ENCODE measurements at regions of chr11 and their contacts with region 1.

Region 1: GRCh38 chr11:114059278-114059983 is at the start of gene ZBTB16:
- DNase-seq: peak; percentile 88 to 90
- ATAC-seq: peak; percentile 71 to 89 (median 78)
- H3K4me3 ChIP-seq: peak within 1 kb of the TSS; percentile 77 to 98 (median 94)
- H3K27ac ChIP-seq: peak within 1 kb of the TSS; percentile 92 to 100 (median 97)
- H3K4me1 ChIP-seq: peaks cover 14 to 60% (median 54%) of the 10 kb centered on the region in 9 donors
- H3K27me3 ChIP-seq: peaks cover 0 to 20% (median 0%) of the 10 kb centered on the region in 7 donors
- CTCF ChIP-seq: peak in 7 of 9 donors; percentile 30 to 70 (median 40)
- total RNA-seq, gene ZBTB16: 18.3 to 108 (median 72.9) TPM

Region 2: DNA sequence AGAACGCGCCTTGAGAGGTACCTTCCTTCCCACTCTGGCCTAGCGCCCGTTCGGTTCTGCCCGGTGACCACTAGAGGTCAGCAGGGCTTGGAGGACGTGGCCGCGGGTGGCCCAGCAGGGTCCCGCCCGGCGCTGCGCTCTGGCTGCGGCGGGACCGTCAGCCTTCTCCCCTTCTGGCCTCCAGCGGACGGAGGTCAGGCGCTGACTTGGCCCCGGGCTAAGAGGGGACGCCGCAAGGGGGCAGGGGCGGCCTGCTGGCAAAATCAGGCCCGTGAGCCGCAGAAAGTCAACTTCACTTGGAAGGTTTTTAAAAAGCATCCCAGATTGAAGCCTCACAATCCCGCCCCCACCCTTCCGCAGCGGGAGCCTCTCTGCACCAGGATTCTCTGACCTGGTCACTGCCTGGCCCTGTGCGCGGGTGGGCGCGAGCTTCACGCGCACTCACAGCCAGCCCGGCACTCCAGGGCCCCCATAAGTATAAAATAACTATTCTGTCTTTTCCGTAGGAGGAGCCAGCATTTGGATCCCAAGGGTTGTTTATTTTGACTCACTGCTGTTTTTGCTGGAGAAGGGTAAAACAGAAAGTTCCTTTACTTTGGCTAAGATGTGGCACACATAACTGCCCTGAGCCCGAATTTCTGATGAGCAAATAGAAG is 23.1 kb before region 1 on chr11:
- intact Hi-C with region 1: loop called in 1 of 10 experiments (anchors 2 kb)
- DNase-seq: peak; percentile 84 to 89
- ATAC-seq: peak; percentile 92 to 97 (median 95)
- H3K4me3 ChIP-seq: peak overlapping the region in 9 of 10 donors; percentile 15 to 58 (median 50)
- H3K27ac ChIP-seq: peak overlapping the region in 9 of 10 donors; percentile 23 to 80 (median 67)
- H3K4me1 ChIP-seq: peaks cover 0 to 19% (median 13%) of the 10 kb centered on the region in 9 donors
- H3K27me3 ChIP-seq: no peaks in the 10 kb centered on the region
- CTCF ChIP-seq: peak; percentile 70 to 98 (median 95)

Region 3: DNA sequence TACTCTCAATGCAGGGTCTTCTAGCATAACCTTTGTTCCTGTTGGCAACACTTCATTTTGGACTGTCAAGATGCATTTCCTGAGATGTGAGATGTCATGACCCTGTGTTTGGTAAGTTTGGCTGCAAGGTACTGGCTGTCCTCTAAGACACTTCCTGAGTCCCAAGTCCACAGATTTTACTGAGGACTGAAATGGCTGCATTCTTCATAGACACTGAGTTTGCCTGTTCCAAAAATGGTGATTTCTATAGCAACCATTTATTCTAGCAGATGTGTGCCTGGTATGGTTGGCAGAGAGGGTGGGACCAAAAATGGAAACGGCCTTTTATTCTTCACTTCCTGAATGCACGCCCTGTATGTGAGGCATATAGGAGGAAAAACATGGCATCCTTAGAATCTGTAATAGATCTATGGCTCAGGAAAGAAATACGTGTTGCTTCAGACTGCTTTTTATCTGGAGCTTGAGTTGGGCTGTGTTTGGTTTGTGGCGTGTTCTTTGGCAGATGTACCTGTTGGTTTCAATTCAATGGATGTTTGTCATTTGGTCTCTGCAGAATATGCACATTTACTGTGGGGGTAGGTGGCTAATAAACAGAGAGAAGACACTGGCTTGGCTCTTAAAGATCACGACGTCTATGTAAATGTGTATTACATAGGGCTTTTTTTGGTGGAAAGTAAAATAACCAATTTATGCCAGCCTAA is 62.5 kb after region 1 on chr11:
- intact Hi-C with region 1: loop called in 1 of 10 experiments (anchors 10 kb)
- DNase-seq: no peak
- ATAC-seq: peak in 2 of 8 donors; percentile 22 to 23
- H3K4me3 ChIP-seq: no peak overlapping the region
- H3K27ac ChIP-seq: peak overlapping the region in 5 of 10 donors; percentile 12 to 60 (median 29)
- H3K4me1 ChIP-seq: peaks cover 32 to 94% (median 89%) of the 10 kb centered on the region in 9 donors
- H3K27me3 ChIP-seq: no peaks in the 10 kb centered on the region
- CTCF ChIP-seq: no peak

Region 4: GRCh38 chr11:114159802-114160632 is 100.6 kb after region 1 on chr11:
- intact Hi-C with region 1: loop called in 6 of 10 experiments (anchors 2 to 5 kb)
- DNase-seq: peak; percentile 99
- ATAC-seq: peak; percentile 61 to 92 (median 84)
- H3K4me3 ChIP-seq: peak overlapping the region in 9 of 10 donors; percentile 1 to 47 (median 32)
- H3K27ac ChIP-seq: peak overlapping the region; percentile 87 to 100 (median 97)
- H3K4me1 ChIP-seq: peaks cover 79 to 99% (median 95%) of the 10 kb centered on the region in 9 donors
- H3K27me3 ChIP-seq: no peaks in the 10 kb centered on the region
- CTCF ChIP-seq: no peak

Region 5: GRCh38 chr11:114180301-114181055 is 121.0 kb after region 1 on chr11:
- intact Hi-C with region 1: loop called in 9 of 10 experiments (anchors 1 to 10 kb)
- DNase-seq: peak; percentile 46 to 72
- ATAC-seq: peak; percentile 53 to 87 (median 69)
- H3K4me3 ChIP-seq: peak overlapping the region in 7 of 10 donors; percentile 4 to 38 (median 15)
- H3K27ac ChIP-seq: peak overlapping the region; percentile 76 to 97 (median 94)
- H3K4me1 ChIP-seq: peaks cover 33 to 92% (median 84%) of the 10 kb centered on the region in 9 donors
- H3K27me3 ChIP-seq: no peaks in the 10 kb centered on the region
- CTCF ChIP-seq: peak; percentile 17 to 84 (median 72)

Region 6: GRCh38 chr11:114257621-114258558 is 198.5 kb after region 1 on chr11:
- intact Hi-C with region 1: loop called in 7 of 10 experiments (anchors 1 to 10 kb)
- DNase-seq: peak; percentile 53 to 68
- ATAC-seq: peak; percentile 49 to 76 (median 62)
- H3K4me3 ChIP-seq: peak overlapping the region in 7 of 10 donors; percentile 6 to 36 (median 25)
- H3K27ac ChIP-seq: peak overlapping the region; percentile 28 to 87 (median 73)
- H3K4me1 ChIP-seq: peaks cover 20 to 60% (median 56%) of the 10 kb centered on the region in 9 donors
- H3K27me3 ChIP-seq: no peaks in the 10 kb centered on the region
- CTCF ChIP-seq: peak in 7 of 9 donors; percentile 13 to 57 (median 45)